Heart right ventricle (tissue), 16 donors: ENCODE measurements at regions of chr10 and their contacts with region 1.

Region 1: DNA sequence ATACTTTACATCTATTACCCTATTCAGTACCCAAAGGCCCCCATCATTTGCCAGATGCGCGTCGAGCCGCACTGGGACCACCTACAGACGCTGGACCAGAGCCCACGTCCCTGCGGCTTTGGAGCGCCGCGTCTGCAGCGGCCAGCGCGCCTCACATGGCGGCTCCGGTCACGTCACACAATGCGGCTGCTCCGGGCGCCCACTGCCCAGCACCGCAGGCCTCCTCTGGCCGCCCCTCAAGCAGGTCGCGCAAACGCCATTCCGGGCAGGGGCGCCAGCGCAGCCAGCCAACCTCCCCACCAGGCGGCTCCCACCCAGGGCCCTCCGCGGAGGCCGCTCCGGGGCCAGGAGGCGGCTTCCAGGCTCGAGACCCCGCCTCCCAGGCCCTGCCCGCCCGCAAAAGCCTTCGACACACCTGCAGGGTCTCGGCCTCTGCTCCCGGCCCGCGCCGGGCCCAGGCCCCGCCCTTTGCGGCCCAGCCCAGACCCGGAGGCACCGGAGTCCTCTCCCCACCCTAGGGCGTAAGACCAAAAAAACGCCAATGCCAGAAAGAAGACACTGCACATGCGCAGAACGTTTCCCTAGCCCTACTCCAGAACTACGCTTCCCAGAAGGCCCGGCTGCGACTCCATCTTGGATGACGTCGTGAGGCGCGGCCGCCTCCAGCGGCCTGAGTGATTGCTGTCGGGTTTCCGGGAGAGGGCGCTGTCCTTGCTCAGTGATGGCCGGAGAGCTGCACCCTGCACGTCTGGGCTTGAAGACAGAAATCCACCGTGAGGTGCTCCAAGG is at the start of gene ZNF25:
- DNase-seq: peak; percentile 96 to 99
- ATAC-seq: peak; percentile 98 to 99 (median 99)
- H3K4me3 ChIP-seq: peak within 1 kb of the TSS; percentile 71 to 96 (median 89)
- H3K27ac ChIP-seq: peak within 1 kb of the TSS; percentile 90 to 100 (median 99)
- H3K4me1 ChIP-seq: peaks cover 0 to 20% (median 12%) of the 10 kb centered on the region in 9 donors
- H3K27me3 ChIP-seq: no peaks in the 10 kb centered on the region
- CTCF ChIP-seq: peak; percentile 71 to 92 (median 86)
- total RNA-seq, gene ZNF25: 15.2 to 22.9 (median 20.4) TPM

Region 2: GRCh38 chr10:37803269-37803668 is 173.0 kb before region 1 on chr10:
- intact Hi-C with region 1: no loop called
- DNase-seq: no peak
- ATAC-seq: peak in 6 of 8 donors; percentile 42 to 90 (median 60)
- H3K4me3 ChIP-seq: no peak overlapping the region
- H3K27ac ChIP-seq: no peak overlapping the region
- H3K4me1 ChIP-seq: no peaks in the 10 kb centered on the region
- H3K27me3 ChIP-seq: no peaks in the 10 kb centered on the region
- CTCF ChIP-seq: no peak

Region 3: DNA sequence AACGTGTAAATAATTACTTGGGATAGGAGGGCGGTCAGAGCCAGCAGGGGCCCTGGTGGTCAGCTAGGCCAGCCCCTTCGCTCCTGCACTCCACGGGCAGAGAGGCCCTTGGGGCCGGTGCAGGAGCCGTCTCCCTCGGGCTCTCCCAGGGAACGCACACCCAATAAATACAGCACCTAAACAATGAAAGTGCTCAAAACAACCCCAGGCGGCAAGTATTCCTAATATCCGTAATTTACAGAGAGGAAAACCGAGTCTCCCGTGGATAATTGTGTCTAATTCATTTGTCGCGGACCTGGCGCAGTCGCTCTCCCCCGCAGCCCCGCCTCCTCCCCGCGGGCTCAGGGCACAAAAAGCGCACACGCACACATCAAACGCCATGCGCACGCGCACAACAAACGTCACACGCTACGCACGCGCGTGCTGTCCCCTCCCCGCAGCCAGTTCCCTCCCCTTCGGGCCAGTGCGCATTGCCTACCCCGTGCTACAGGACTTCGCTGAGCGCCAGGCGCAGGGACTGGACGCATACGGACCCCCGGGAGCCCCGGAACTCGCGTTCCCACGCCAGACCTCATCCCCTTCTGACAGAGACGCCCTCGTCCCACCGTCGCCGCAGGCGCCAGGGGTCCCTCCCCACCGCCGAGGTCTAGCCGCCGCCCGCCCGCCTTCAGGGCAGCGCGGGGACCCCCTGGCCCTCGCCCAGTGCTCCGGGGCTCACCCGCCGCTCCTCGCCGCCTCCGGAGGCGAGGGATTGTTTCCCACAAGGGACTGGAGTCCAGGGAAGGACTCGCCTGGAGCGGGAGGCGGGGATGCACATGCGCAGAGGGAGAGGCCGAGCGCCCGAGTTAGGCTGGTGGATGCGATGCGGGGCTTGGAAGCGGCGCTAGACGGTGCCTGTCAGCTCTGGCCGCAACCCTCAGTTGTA is 118.7 kb before region 1 on chr10 and contains the start of gene ZNF248:
- intact Hi-C with region 1: loop called in 6 of 10 experiments (anchors 2 to 10 kb)
- DNase-seq: peak; percentile 96 to 97
- ATAC-seq: peak; percentile 99 to 100 (median 99)
- H3K4me3 ChIP-seq: peak within 1 kb of the TSS; percentile 57 to 98 (median 88)
- H3K27ac ChIP-seq: peak within 1 kb of the TSS; percentile 99 to 100 (median 100)
- H3K4me1 ChIP-seq: peaks cover 0 to 36% (median 32%) of the 10 kb centered on the region in 9 donors
- H3K27me3 ChIP-seq: no peaks in the 10 kb centered on the region
- CTCF ChIP-seq: peak in 3 of 9 donors; percentile 20 to 22 (median 20)
- total RNA-seq, gene ZNF248: 7.4 to 13.9 (median 9.1) TPM

Region 4: DNA sequence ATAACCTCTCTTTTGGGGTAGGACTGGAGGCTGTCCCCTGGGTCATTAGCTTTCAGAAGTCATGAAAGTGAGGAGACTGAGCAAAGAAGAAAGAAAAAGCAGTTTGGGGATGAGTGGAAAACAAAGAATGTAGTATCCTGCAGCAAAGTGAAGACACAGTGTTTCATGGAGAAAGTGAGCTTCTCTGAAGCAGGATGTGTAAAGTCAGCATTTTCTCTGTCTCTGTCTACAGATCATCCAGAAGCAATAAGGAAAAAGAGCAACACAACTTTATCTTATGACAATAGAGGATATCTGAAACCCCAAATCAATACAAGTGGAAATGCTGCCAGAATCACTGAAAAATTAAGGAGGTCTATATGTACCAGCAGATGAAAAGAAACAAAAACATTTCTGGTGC is 90.4 kb before region 1 on chr10:
- intact Hi-C with region 1: no loop called
- DNase-seq: no peak
- ATAC-seq: no peak
- H3K4me3 ChIP-seq: no peak overlapping the region
- H3K27ac ChIP-seq: no peak overlapping the region
- H3K4me1 ChIP-seq: no peaks in the 10 kb centered on the region
- H3K27me3 ChIP-seq: no peaks in the 10 kb centered on the region
- CTCF ChIP-seq: no peak

Region 5: GRCh38 chr10:38010119-38010903 is 34.0 kb after region 1 on chr10 and contains the start of gene ZNF33A:
- intact Hi-C with region 1: loop called in 6 of 10 experiments (anchors 1 to 5 kb)
- DNase-seq: peak; percentile 89 to 92
- ATAC-seq: peak; percentile 92 to 99 (median 96)
- H3K4me3 ChIP-seq: peak within 1 kb of the TSS; percentile 29 to 80 (median 70)
- H3K27ac ChIP-seq: peak within 1 kb of the TSS; percentile 94 to 99 (median 98)
- H3K4me1 ChIP-seq: peaks cover 0 to 17% (median 9%) of the 10 kb centered on the region in 9 donors
- H3K27me3 ChIP-seq: no peaks in the 10 kb centered on the region
- CTCF ChIP-seq: peak in 1 of 9 donors; percentile 36
- total RNA-seq, gene ZNF33A: 16.8 to 27.7 (median 23.2) TPM

Region 6: DNA sequence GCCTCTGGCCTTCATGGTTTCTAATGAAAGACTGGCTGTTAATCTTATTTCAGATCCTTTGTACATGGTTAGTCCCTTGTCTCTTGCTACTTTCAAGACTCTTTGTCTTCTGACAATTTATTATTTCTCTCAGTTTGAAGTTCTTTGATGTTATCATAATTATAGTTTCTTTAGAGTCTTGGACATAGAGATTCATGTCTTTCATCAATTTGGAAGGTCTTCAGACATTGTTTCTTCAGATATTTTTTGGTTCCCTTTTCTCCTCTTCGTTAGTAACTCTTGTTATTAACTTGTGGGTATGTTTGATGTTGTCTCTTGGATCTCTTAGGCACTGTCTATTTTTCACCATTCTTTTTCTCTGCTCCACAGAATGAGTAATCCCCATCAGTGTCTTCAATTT is 126.6 kb after region 1 on chr10:
- intact Hi-C with region 1: loop called in 3 of 10 experiments (anchors 5 to 10 kb)
- DNase-seq: no peak
- ATAC-seq: no peak
- H3K4me3 ChIP-seq: no peak overlapping the region
- H3K27ac ChIP-seq: no peak overlapping the region
- H3K4me1 ChIP-seq: no peaks in the 10 kb centered on the region
- H3K27me3 ChIP-seq: no peaks in the 10 kb centered on the region
- CTCF ChIP-seq: no peak